Naive thymus-derived CD4-positive, alpha-beta T cell (primary cell): ENCODE measurements at regions of chr3 and their contacts with region 1.

Region 1: DNA sequence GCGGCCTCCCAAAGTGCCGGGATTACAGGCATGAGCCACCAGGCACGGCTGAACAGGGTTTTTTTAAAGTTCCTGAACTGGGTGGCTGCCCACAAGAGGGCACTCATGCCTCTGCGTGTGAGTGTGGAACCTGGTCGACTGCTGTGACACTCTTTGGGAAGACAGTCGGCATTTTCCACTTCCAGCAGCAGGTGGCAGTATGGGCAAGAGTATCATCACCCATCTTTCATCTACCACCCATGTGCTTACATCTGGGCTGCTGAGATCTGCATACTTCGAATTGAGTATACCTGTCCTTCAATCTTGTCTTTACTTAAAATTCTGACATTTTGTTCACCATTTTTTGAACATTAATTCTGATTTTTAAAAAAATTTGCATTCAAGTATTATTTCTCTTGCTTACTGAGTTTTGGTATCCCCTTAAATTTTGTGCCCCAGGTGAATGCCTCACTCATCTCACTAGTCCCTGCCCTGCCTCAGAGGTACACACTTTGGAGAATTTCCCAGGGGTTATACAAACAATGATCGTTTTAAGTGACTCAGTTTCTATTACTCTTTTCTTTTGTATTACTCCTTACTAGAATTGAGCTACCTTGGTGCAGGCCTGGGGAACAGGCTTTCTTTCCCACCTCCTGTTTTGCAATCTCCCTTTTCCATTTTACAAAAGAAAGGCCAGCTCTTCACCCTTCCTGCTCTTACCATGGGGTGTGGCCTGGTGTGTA is 11.8 kb downstream of the CLEC3B start:
- DNase-seq: peak; percentile 71 to 94 (median 92)
- ATAC-seq: peak; percentile 98
- H3K4me3 ChIP-seq: no peak overlapping the region
- H3K4me3 Mint-ChIP-seq: peak overlapping the region in 8 of 10 donors; percentile 33 to 84 (median 74)
- H3K27ac ChIP-seq: no peak overlapping the region
- H3K27ac Mint-ChIP-seq: no peak overlapping the region
- H3K4me1 ChIP-seq: peaks cover 9 to 29% of the 10 kb centered on the region in 2 donors
- H3K4me1 Mint-ChIP-seq: peaks cover 25 to 70% (median 58%) of the 10 kb centered on the region in 7 donors
- H3K27me3 ChIP-seq: no peaks in the 10 kb centered on the region
- H3K27me3 Mint-ChIP-seq: peaks cover 0 to 32% (median 8%) of the 10 kb centered on the region in 5 donors

Region 2: DNA sequence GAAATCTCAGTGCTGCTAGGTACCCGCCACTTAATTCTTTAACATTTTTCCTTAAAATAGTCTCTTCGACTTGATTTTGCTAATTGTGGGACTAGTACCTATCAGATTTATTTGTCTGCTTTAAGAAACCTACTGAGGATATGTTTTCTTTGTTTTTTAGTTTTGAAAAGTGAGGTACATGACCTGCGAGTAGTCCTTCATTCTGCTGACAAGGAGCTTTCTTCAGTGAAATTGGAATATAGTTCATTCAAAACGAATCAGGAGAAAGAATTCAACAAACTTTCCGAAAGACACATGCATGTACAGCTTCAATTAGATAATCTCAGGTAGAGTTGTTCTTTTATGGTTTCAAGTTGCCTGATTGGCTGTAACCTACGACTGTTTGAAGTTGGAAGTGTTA is 223.1 kb before region 1 on chr3:
- CTCF ChIA-PET with region 1: no interaction called
- POLR2A ChIA-PET with region 1: no interaction called
- intact Hi-C with region 1: no loop called
- DNase-seq: no peak
- ATAC-seq: no peak
- H3K4me3 ChIP-seq: no peak overlapping the region
- H3K4me3 Mint-ChIP-seq: no peak overlapping the region
- H3K27ac ChIP-seq: no peak overlapping the region
- H3K27ac Mint-ChIP-seq: no peak overlapping the region
- H3K4me1 ChIP-seq: no peaks in the 10 kb centered on the region
- H3K4me1 Mint-ChIP-seq: no peaks in the 10 kb centered on the region
- H3K27me3 ChIP-seq: no peaks in the 10 kb centered on the region
- H3K27me3 Mint-ChIP-seq: no peaks in the 10 kb centered on the region

Region 3: GRCh38 chr3:45167011-45167911 is 129.4 kb after region 1 on chr3:
- CTCF ChIA-PET with region 1: no interaction called
- POLR2A ChIA-PET with region 1: no interaction called
- intact Hi-C with region 1: loop called (anchors 1 kb)
- DNase-seq: peak; percentile 56 to 79 (median 74)
- ATAC-seq: peak; percentile 95
- H3K4me3 ChIP-seq: peak overlapping the region; percentile 33
- H3K4me3 Mint-ChIP-seq: peak overlapping the region; percentile 65 to 87 (median 78)
- H3K27ac ChIP-seq: peak overlapping the region; percentile 30
- H3K27ac Mint-ChIP-seq: peak overlapping the region; percentile 82 to 95 (median 90)
- H3K4me1 ChIP-seq: peaks cover 9 to 19% of the 10 kb centered on the region in 2 donors
- H3K4me1 Mint-ChIP-seq: peaks cover 16 to 56% (median 40%) of the 10 kb centered on the region in 7 donors
- H3K27me3 ChIP-seq: no peaks in the 10 kb centered on the region
- H3K27me3 Mint-ChIP-seq: peaks cover 0 to 3% (median 0%) of the 10 kb centered on the region in 5 donors

Region 4: DNA sequence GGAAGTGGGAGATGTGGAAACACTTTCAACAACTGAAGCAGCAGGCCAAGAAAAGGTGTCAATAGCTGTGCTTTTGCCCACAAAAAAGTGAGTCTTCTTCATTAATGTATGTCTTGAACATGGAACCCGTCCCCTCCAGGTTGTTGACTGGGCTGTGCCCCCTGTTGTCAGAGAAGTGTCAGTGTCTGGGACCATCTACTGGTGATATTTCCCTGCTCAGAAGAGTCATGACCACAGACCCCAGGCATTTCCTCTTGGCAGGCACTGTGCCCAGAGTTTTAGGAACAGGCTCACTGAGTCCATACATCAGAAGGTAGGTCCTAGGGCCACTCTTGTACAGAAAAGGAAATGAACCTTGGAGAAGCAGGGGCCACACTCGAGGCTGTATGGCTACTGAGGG is 295.7 kb after region 1 on chr3:
- CTCF ChIA-PET with region 1: no interaction called
- POLR2A ChIA-PET with region 1: no interaction called
- intact Hi-C with region 1: loop called (anchors 1 to 5 kb)
- DNase-seq: no peak
- ATAC-seq: no peak
- H3K4me3 ChIP-seq: no peak overlapping the region
- H3K4me3 Mint-ChIP-seq: no peak overlapping the region
- H3K27ac ChIP-seq: no peak overlapping the region
- H3K27ac Mint-ChIP-seq: no peak overlapping the region
- H3K4me1 ChIP-seq: peaks cover 0 to 5% of the 10 kb centered on the region in 2 donors
- H3K4me1 Mint-ChIP-seq: peaks cover 0 to 16% (median 9%) of the 10 kb centered on the region in 7 donors
- H3K27me3 ChIP-seq: no peaks in the 10 kb centered on the region
- H3K27me3 Mint-ChIP-seq: peaks cover 8 to 33% (median 20%) of the 10 kb centered on the region in 5 donors

Region 5: DNA sequence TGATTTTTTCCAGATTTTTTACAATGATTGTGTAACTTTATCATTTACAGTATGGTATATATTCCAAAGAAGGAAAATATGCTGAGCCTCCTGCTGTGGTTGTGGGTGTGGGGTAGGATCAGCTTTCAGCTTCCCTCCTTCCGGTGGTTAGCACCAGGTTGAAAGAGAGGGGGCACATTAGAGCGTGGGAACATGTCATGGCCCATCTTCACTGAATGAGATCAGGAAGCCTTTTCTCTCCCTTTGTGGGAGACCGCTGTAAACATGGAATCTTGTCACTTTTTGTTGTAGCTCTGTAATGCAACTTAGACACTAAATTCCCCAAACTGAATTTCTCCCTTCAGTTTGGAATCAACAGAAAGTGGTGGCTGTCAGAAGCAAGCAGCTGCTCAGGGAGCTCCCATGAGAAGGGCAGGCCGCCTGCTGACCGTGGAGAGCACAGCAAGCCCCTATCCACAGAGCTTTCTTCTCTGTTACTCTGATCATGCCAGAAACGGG is 470.0 kb after region 1 on chr3:
- CTCF ChIA-PET with region 1: interaction called, 5 read pairs
- POLR2A ChIA-PET with region 1: no interaction called
- intact Hi-C with region 1: loop called in 1 of 2 experiments (anchors 2 kb)
- DNase-seq: peak in 3 of 9 donors; percentile 8 to 17 (median 14)
- ATAC-seq: no peak
- H3K4me3 ChIP-seq: no peak overlapping the region
- H3K4me3 Mint-ChIP-seq: no peak overlapping the region
- H3K27ac ChIP-seq: no peak overlapping the region
- H3K27ac Mint-ChIP-seq: no peak overlapping the region
- H3K4me1 ChIP-seq: peaks cover 0 to 13% of the 10 kb centered on the region in 2 donors
- H3K4me1 Mint-ChIP-seq: peaks cover 0 to 13% (median 0%) of the 10 kb centered on the region in 7 donors
- H3K27me3 ChIP-seq: no peaks in the 10 kb centered on the region
- H3K27me3 Mint-ChIP-seq: no peaks in the 10 kb centered on the region

Region 6: GRCh38 chr3:45665101-45665572 is 627.2 kb after region 1 on chr3:
- CTCF ChIA-PET with region 1: interaction called, 13 read pairs
- POLR2A ChIA-PET with region 1: no interaction called
- intact Hi-C with region 1: loop called (anchors 1 to 2 kb)
- DNase-seq: peak in 8 of 9 donors; percentile 49 to 79 (median 75)
- ATAC-seq: peak; percentile 74
- H3K4me3 ChIP-seq: peak overlapping the region; percentile 64
- H3K4me3 Mint-ChIP-seq: peak overlapping the region; percentile 80 to 96 (median 89)
- H3K27ac ChIP-seq: peak overlapping the region; percentile 81
- H3K27ac Mint-ChIP-seq: peak overlapping the region; percentile 85 to 97 (median 92)
- H3K4me1 ChIP-seq: peaks cover 13 to 19% of the 10 kb centered on the region in 2 donors
- H3K4me1 Mint-ChIP-seq: peaks cover 15 to 49% (median 33%) of the 10 kb centered on the region in 7 donors
- H3K27me3 ChIP-seq: no peaks in the 10 kb centered on the region
- H3K27me3 Mint-ChIP-seq: no peaks in the 10 kb centered on the region